ENCODE measurements at regions of chr16 and their contacts with region 1.

Region 1: DNA sequence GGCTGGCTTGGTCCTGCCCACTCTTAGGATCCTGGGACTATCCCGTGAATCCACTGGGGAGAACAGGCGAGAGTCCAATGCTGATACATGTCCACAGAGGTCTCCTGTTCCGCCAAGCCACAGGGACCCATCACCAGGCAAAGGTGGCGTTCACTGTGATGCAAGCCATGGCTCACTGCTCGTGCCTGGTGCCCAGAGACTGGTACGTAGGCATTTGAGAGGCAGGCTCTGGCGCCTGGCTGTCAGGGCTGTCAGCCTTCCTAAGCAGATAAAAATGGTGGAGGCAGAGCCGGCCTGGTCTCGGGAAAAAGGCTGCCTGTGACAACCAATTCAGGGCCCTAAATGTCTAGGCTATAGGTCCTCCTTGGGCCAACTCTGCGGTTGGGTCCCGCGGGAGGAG is 2329.0 kb downstream of the TP53TG3F start:
- DNase-seq: no peak
- H3K4me3 ChIP-seq: no peak overlapping the region
- H3K4me3 Mint-ChIP-seq: no peak overlapping the region
- H3K27ac ChIP-seq: no peak overlapping the region
- H3K27ac Mint-ChIP-seq: no peak overlapping the region
- H3K4me1 ChIP-seq: no peaks in the 10 kb centered on the region
- H3K4me1 Mint-ChIP-seq: no peaks in the 10 kb centered on the region
- H3K27me3 ChIP-seq: no peaks in the 10 kb centered on the region
- H3K27me3 Mint-ChIP-seq: no peaks in the 10 kb centered on the region
- CTCF ChIP-seq: no peak

Region 2: DNA sequence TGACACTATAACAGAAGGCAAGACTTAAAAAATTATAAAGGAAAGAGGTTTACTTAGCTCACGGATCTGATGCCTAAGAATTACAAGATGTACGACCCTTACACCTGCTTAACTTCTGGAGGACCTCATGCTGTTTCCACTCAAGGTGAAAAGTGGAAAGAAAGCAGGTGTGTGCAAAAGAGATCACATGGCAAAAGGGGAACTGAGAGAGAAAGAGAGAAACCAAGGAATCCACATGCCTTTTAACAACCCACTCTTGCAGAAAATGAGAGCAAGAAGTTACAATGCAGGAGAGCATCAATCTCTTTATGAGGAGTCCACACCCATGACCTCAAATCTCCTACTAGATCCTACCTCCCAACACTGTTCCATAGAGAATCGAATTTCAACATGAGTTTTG is 53.3 kb after region 1 on chr16:
- intact Hi-C with region 1: loop called in 1 of 2 experiments (anchors 10 kb)
- DNase-seq: no peak
- H3K4me3 ChIP-seq: no peak overlapping the region
- H3K4me3 Mint-ChIP-seq: no peak overlapping the region
- H3K27ac ChIP-seq: no peak overlapping the region
- H3K27ac Mint-ChIP-seq: no peak overlapping the region
- H3K4me1 ChIP-seq: no peaks in the 10 kb centered on the region
- H3K4me1 Mint-ChIP-seq: no peaks in the 10 kb centered on the region
- H3K27me3 ChIP-seq: no peaks in the 10 kb centered on the region
- H3K27me3 Mint-ChIP-seq: no peaks in the 10 kb centered on the region
- CTCF ChIP-seq: no peak